Right ventricle myocardium inferior (tissue), 1 donor: ENCODE measurements at regions of chr12 and their contacts with region 1.

Region 1: GRCh38 chr12:124422570-124423523 is 128.0 kb downstream of the RFLNA start:
- DNase-seq: peak; percentile 94
- ATAC-seq: peak; percentile 84

Region 2: DNA sequence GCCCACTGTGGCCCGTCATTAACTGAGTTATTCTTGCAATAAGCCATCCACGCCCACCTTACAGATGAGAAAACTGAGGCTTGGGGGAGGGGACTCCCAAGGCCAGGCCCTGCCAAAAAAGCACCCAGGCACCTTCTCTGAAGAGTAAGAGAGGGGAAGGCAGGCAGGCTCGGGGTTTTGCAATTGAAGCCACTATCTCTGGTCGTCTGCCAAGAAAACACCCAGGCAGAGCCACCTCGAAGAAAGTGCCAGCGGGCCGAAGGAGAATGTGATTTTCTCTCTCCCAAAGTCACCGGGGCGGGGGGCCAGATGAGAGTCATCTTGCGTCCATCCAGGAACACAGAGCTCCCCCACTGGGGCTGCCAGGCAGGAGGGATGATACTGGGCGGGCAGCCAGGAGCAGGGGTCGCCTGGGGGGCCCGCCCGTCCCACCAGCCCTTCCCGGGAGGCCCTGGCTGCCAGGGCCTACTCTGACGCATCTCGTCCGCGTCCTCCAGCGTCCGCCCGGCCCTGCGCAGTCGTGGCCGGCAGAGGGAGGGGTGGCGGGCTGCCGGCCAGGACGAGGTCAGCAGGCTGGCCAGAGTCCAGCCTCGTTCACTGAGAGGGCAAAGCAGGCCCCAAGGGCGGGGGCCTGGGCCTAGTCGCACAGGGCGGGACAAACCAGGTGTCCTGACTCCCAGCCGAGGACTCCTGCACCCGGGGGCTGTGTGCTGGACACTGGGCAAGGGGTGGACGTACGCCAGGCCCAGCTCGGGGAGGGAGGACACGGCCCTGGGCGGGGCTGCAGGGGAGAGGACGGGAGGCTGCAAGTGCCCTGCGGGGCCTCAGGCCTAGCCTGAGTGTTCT is 53.6 kb before region 1 on chr12:
- intact Hi-C with region 1: loop called (anchors 5 kb)
- DNase-seq: peak; percentile 94
- ATAC-seq: peak; percentile 85

Region 3: DNA sequence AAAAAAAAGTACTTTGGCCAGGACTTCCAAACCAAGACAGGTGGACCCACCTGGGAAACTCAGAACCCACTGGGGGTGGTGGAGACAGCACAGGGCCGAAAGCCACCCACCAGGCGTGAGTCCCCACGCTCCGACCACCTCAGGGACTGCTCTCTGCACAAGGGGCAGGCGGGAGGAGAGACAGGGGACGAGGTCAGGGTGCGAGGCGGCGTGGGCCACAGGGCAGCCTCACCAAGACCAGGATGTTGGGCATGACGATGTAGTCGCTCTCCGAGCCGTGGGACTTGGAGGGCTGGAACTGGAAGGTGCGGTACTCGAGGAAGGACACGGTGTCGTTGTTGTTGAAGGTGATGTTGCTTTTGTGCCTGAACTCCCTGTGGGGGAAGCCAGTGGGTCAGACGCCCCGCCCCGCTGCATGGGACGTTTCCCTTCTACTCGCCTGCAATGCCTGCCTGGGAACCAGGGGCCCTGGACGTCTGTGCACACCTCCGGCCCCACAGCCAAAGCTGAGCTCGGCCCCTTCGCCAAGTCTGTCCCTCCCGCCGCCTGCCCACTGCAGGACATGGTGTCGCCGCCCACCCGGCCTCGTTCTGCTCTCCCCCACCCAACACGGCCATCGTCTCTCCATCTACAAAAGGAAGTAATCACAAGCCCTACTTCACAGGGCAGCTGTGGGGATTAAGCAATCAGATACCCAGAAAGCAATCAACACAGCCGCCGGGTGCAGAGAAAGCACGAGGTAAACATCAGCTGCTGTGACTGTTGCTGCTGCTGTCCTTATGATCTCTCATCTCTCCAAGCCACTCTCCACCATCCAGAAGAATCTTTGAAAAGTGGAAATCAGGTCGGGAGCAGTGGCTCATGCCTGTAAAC is 392.1 kb after region 1 on chr12:
- intact Hi-C with region 1: no loop called
- DNase-seq: no peak
- ATAC-seq: no peak